ENCODE measurements at regions of chr11 and their contacts with region 1.

Region 1: GRCh38 chr11:1050581-1051355 is 14.2 kb upstream of the MUC6 start:
- DNase-seq: peak; percentile 57
- ATAC-seq: peak; percentile 89 to 91

Region 2: GRCh38 chr11:848380-848931 is 202.3 kb before region 1 on chr11:
- intact Hi-C with region 1: loop called (anchors 5 to 10 kb)
- DNase-seq: peak; percentile 67
- ATAC-seq: peak in 1 of 2 donors; percentile 11

Region 3: GRCh38 chr11:859509-860131 is 191.1 kb before region 1 on chr11:
- intact Hi-C with region 1: loop called in 1 of 2 experiments (anchors 10 kb)
- DNase-seq: peak; percentile 88
- ATAC-seq: peak; percentile 73 to 80

Region 4: DNA sequence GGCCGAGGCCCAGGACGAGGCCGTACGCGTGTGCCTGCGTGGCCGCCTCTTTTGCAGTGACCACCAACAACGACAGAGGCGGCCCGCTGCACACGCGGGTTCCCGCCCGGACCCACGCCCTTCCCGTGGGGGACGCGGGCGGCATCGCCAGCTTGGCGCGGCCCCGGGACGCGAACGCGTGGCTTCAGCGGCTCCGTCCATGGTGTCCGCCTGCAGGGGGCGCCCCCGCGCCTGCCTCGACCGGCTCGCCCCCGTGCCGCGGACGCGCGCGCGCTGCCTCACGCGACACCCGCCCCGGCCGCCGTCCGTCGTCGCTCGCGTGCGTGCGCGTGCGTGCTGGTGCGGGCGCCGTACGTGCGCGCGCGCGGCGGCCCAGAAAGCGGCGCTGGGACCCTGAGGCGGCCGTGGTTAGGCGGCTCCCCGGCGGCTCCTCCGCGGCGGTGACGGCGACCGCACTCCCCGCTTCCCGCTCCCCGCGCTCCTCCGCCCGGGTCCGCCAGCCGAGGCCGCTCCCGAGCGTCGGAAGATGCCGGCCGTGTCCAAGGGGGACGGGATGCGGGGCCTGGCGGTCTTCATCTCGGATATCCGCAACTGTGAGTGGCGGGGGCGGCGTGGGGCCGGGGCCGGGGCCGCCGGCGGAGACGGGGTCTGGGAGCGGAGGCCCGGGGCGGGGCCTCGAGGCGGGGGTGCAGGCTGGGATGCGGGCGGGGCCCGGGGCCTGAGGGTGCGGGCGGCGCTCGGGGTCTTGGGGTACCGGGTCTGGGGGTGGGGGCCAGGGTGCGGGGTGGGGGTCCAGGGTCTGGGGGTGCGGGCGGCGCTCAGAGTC is 125.1 kb before region 1 on chr11 and contains the start of gene AP2A2:
- intact Hi-C with region 1: loop called in 1 of 2 experiments (anchors 10 kb)
- DNase-seq: peak; percentile 93
- ATAC-seq: peak; percentile 91 to 97
- total RNA-seq, gene AP2A2: 58.1 to 58.6 TPM

Region 5: GRCh38 chr11:1222491-1223345 is 171.9 kb after region 1 on chr11 and contains the start of gene MUC5B:
- intact Hi-C with region 1: no loop called
- DNase-seq: peak; percentile 22
- ATAC-seq: no peak
- total RNA-seq, gene MUC5B: not detected

Measured in left cardiac atrium (tissue), 4 donors.